ENCODE measurements at regions of chr4 and their contacts with region 1.

Region 1: GRCh38 chr4:184263910-184264732 is 46.4 kb upstream of the ENPP6 start:
- DNase-seq: peak; percentile 98
- ATAC-seq: peak; percentile 64
- H3K4me3 Mint-ChIP-seq: peak overlapping the region; percentile 48
- H3K27ac Mint-ChIP-seq: peak overlapping the region; percentile 63
- H3K4me1 Mint-ChIP-seq: peaks cover 50% of the 10 kb centered on the region
- H3K27me3 Mint-ChIP-seq: no peaks in the 10 kb centered on the region

Region 2: GRCh38 chr4:184282251-184282713 is 18.2 kb after region 1 on chr4:
- CTCF ChIA-PET with region 1: interaction called, 191 read pairs
- POLR2A ChIA-PET with region 1: interaction called, 71 read pairs
- DNase-seq: peak; percentile 79
- ATAC-seq: peak; percentile 86
- H3K4me3 Mint-ChIP-seq: no peak overlapping the region
- H3K27ac Mint-ChIP-seq: peak overlapping the region; percentile 84
- H3K4me1 Mint-ChIP-seq: peaks cover 44% of the 10 kb centered on the region
- H3K27me3 Mint-ChIP-seq: no peaks in the 10 kb centered on the region

Region 3: GRCh38 chr4:184320631-184321030 is 56.5 kb after region 1 on chr4:
- CTCF ChIA-PET with region 1: interaction called, 12 read pairs
- POLR2A ChIA-PET with region 1: interaction called, 4 read pairs
- DNase-seq: peak; percentile 13
- ATAC-seq: no peak
- H3K4me3 Mint-ChIP-seq: no peak overlapping the region
- H3K27ac Mint-ChIP-seq: no peak overlapping the region
- H3K4me1 Mint-ChIP-seq: peaks cover 40% of the 10 kb centered on the region
- H3K27me3 Mint-ChIP-seq: no peaks in the 10 kb centered on the region

Region 4: DNA sequence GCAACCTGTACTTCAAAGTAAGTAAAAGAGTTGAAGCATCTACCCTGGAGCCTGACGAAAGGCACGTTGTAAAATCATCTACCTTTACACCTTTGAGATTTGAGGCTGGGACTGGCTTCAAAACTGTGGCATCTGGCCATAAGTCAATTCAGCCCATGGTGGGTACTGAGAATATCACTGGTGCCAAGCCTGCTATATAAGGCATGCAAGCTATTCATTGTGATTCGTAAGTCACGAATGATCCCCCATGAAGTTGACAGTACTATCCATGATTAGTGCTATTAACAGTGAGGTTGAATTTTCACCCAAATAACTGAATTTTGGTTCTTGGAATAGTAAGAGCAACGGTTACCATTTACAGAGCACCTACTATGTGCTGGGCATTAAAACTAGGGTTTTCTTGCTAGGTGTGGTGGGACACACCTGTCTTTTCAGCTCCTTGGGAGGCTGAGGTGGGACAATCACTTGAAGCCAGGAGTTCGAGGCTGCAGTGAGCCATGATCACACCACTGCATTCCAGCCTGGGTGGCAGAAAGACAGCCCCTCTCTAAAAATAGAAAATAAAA is 170.5 kb after region 1 on chr4:
- CTCF ChIA-PET with region 1: interaction called, 13 read pairs
- POLR2A ChIA-PET with region 1: no interaction called
- DNase-seq: no peak
- ATAC-seq: no peak
- H3K4me3 Mint-ChIP-seq: no peak overlapping the region
- H3K27ac Mint-ChIP-seq: no peak overlapping the region
- H3K4me1 Mint-ChIP-seq: peaks cover 22% of the 10 kb centered on the region
- H3K27me3 Mint-ChIP-seq: no peaks in the 10 kb centered on the region

Region 5: DNA sequence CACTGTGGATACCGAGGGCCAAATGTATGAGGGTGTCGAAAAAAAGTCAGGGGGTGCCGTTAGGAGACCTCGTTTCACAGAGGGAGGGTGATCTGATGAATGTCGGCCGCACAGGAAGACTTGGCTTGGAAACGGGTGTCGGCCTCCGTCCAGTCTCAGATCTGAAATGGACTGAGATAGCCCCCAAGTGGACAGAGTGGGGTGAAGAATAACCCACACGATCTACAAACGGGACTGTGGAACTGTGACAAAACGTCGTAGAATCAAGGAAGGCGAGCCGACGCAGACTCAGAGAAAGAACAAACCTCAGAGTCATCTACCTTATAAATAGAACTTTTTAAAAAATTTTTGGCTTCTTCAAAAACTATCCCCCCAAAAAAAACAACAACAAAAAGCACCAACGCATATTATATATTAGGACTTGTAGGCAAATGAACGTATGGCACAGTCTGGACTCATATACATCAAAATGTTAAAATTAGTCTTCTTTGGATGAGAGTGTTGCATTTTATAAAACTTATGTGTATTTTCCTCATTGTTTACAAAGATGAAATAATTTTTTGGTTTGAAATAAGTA is 274.0 kb after region 1 on chr4:
- CTCF ChIA-PET with region 1: interaction called, 70 read pairs
- POLR2A ChIA-PET with region 1: interaction called, 7 read pairs
- DNase-seq: peak; percentile 79
- ATAC-seq: peak; percentile 54
- H3K4me3 Mint-ChIP-seq: peak overlapping the region; percentile 95
- H3K27ac Mint-ChIP-seq: peak overlapping the region; percentile 96
- H3K4me1 Mint-ChIP-seq: peaks cover 39% of the 10 kb centered on the region
- H3K27me3 Mint-ChIP-seq: no peaks in the 10 kb centered on the region